SK-N-SH (cell line): ENCODE measurements at regions of chr1 and their contacts with region 1.

Region 1: GRCh38 chr1:224052772-224053171 is 61.1 kb upstream of the FBXO28 start:
- DNase-seq: no peak
- H3K4me3 ChIP-seq: no peak overlapping the region
- H3K27ac ChIP-seq: peak overlapping the region in 1 of 2 experiments; percentile 44; a peak in 2 of 4 replicates
- H3K4me1 ChIP-seq: no peaks in the 10 kb centered on the region
- H3K27me3 ChIP-seq: no peaks in the 10 kb centered on the region
- CTCF ChIP-seq: no peak
- EP300 ChIP-seq: no peak
- RAD21 ChIP-seq: no peak

Region 2: DNA sequence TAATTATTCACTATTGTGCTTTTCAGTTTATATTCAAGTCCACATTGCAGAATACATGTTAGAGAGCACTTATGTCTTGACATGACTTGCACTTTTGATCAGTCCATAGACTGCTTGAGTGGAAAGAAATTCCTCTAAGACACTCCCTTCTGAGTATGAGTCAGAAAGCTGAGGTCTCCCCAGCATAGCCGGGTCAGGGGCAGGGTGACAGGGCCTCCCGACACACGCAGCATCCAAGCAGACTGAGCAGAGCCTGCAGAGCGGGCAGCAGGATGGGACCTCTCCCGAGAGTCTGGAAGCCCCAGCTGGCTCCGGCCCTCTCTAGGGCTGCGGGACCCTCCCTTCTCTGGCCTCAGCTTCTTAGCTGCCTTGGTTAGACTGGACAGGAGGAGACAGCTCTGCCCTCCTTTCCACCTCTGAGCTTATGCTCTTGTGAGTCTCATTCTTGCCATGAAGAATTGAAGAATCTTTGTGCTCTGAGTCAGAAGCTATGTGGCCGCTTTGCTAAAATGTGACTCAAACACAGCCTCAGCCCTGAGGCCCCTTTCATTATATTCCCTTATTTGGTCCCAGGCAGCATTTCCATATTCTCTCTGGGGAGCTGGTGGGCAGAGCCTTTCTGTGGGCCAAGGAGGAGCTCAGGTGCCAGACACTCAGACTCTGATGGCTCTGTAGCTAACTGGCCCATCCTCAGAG is 351.7 kb before region 1 on chr1:
- CTCF ChIA-PET with region 1: interaction called, 10 read pairs
- POLR2A ChIA-PET with region 1: no interaction called
- DNase-seq: no peak
- H3K4me3 ChIP-seq: peak overlapping the region in 1 of 2 experiments; percentile 41; a peak in 3 of 4 replicates
- H3K27ac ChIP-seq: peak overlapping the region; percentile 17 to 97; a peak in 3 of 4 replicates
- H3K4me1 ChIP-seq: peaks cover 5 to 41% of the 10 kb centered on the region in 2 experiments; a peak in 3 of 4 replicates
- H3K27me3 ChIP-seq: no peaks in the 10 kb centered on the region
- CTCF ChIP-seq: no peak
- EP300 ChIP-seq: peak in 1 of 2 experiments; percentile 83; a peak in 2 of 4 replicates
- RAD21 ChIP-seq: no peak

Region 3: DNA sequence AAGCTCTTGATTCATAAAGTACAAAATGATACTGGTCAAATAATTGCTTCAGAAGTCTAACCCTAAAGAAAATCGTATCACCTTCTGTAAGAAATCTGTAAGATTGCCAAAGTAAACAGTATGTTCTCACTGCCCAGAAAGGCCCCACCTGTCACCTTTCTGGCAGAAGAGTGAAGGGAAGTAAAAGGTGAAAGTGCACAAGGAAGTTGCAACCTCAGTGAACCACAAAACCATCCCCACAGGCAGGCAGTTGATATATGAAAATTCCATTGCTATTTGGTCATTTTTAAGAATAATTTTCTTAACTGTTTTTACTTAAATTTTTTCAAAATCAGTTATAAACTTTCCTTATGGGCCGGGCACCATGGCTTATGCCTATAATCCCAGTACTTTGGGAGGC is 12.7 kb after region 1 on chr1:
- CTCF ChIA-PET with region 1: interaction called, 31 read pairs
- POLR2A ChIA-PET with region 1: no interaction called
- DNase-seq: no peak
- H3K4me3 ChIP-seq: no peak overlapping the region
- H3K27ac ChIP-seq: no peak overlapping the region
- H3K4me1 ChIP-seq: peaks cover 0 to 12% of the 10 kb centered on the region in 2 experiments; a peak in 2 of 4 replicates
- H3K27me3 ChIP-seq: no peaks in the 10 kb centered on the region
- CTCF ChIP-seq: no peak
- EP300 ChIP-seq: no peak
- RAD21 ChIP-seq: no peak